Keratinocyte (primary cell): ENCODE measurements at regions of chr10 and their contacts with region 1.

Region 1: DNA sequence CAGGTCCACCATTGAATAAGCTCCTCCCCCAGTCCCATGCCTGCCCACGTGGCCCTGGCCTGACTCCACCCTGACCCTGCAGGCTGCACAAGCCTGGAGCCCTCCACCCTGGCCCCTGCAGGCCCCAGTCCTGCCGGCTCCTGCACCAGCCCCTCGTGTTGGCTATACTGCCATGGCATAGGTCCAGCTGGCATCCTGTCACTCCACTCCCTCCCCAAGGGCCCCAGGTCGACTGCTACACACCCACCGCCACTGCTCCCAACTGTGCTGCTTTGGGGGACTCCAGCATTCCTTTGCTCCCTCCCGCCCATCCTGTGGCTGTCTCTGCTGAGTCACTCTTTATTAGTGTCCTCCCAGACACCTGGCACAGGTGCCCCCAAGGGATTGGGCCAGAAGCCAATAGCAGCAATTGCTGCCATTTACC is 32.4 kb upstream of the HSPA12A start:
- DNase-seq: peak; percentile 46
- H3K4me3 ChIP-seq: no peak overlapping the region
- H3K27ac ChIP-seq: no peak overlapping the region
- H3K4me1 ChIP-seq: peaks cover 24% of the 10 kb centered on the region
- H3K27me3 ChIP-seq: no peaks in the 10 kb centered on the region
- CTCF ChIP-seq: no peak

Region 2: DNA sequence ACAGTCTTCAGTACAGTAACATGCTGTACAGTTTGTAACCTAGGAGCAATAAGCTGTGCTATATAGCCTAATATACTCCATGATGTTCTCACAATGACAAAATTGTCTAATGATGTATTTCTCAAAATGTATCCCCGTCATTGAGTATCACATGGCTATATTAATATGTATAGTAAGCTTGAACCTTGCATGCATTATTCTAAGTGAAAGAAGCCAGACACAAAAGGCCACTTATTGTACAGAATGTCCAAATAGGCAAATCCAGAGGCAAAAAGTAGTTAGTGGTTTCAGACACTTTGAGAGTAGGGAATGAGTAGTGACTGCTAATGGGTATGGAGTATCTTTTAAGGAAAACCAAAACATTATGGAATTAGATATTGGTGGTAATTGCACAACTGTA is 1136.5 kb before region 1 on chr10:
- dilution Hi-C with region 1: no loop called
- DNase-seq: no peak
- H3K4me3 ChIP-seq: no peak overlapping the region
- H3K27ac ChIP-seq: no peak overlapping the region
- H3K4me1 ChIP-seq: no peaks in the 10 kb centered on the region
- H3K27me3 ChIP-seq: no peaks in the 10 kb centered on the region
- CTCF ChIP-seq: no peak

Region 3: DNA sequence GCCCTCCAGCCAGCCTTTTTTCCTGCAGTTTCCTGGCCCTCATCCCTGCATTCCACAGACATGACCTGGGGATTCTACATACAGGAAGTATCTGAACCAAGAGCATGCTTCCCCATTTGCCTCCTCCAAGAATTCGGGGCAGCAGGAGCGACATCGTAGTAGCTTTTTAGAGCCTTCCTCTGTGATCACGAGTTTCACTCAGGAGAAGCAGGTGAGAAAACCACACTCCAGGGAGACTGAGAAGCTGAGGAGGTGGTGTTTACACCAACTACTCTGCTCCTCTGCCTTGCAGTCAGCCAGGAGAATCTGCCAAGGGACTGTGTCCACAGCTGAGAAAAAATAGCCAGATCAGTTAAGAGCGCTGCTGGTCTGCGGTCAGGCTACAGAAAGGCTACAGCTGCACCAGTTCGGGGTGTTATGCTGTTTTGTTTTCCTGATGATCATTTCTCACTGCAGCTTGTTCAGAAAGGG is 86.5 kb before region 1 on chr10:
- dilution Hi-C with region 1: loop called (anchors 5 kb)
- DNase-seq: no peak
- H3K4me3 ChIP-seq: no peak overlapping the region
- H3K27ac ChIP-seq: no peak overlapping the region
- H3K4me1 ChIP-seq: no peaks in the 10 kb centered on the region
- H3K27me3 ChIP-seq: no peaks in the 10 kb centered on the region
- CTCF ChIP-seq: no peak

Region 4: DNA sequence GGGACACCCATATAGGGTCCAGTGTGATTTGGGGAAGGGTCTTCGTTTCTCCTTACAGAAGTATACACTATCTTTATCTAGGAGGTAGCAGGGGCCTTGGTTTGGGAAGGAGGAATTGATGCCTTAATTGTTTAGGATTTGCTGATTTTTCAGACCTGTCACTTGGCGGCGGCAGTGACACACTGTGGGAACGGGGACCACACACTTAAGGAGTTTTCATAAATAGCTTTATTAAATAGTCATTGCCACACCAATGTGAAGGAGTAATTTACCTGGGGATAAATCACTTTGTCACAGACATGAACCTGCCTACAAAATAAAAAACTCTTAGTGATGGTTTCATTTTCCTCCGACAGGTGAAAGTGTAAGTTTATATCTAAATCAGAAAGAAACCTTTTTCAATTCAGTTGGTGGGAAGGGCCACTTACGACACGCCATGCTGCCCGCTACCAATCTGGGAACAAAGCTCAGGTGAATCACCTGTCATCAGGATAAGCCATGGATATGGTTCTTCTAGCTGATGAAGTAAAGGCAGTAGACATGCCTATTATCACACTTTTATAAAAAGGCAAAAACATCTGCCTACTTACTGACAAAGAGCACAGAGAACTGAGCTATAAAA is 62.3 kb after region 1 on chr10:
- dilution Hi-C with region 1: no loop called
- DNase-seq: no peak
- H3K4me3 ChIP-seq: no peak overlapping the region
- H3K27ac ChIP-seq: no peak overlapping the region
- H3K4me1 ChIP-seq: no peaks in the 10 kb centered on the region
- H3K27me3 ChIP-seq: no peaks in the 10 kb centered on the region
- CTCF ChIP-seq: peak in 1 of 3 experiments; percentile 8